ENCODE measurements at regions of chr1 and their contacts with region 1.

Region 1: GRCh38 chr1:246753670-246754535 is 29.7 kb downstream of the SCCPDH start:
- DNase-seq: no peak
- H3K4me3 ChIP-seq: no peak overlapping the region
- CTCF ChIP-seq: peak; percentile 80

Region 2: DNA sequence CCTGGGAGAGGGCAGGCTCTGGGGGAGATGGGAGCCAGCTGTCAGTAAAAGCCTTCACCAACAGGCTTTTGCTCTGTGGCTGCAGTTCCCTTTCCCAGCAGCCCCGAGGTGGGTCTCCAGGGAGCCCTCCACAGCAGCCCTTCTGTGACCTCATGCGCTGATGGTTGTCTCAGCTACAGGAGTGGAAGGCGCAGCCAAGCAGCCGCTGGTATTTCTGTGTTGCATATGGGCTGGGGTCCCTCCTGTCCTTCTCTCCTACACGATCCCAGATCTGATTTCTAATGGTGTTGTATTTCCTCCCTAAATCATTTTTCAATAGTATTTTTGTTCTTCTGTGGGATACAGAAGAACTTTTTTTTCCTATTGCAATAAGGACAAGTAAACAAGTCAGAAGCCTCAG is 72.0 kb before region 1 on chr1:
- CTCF ChIA-PET with region 1: interaction called, 20 read pairs
- POLR2A ChIA-PET with region 1: no interaction called
- DNase-seq: no peak
- H3K4me3 ChIP-seq: no peak overlapping the region
- CTCF ChIP-seq: no peak

Region 3: DNA sequence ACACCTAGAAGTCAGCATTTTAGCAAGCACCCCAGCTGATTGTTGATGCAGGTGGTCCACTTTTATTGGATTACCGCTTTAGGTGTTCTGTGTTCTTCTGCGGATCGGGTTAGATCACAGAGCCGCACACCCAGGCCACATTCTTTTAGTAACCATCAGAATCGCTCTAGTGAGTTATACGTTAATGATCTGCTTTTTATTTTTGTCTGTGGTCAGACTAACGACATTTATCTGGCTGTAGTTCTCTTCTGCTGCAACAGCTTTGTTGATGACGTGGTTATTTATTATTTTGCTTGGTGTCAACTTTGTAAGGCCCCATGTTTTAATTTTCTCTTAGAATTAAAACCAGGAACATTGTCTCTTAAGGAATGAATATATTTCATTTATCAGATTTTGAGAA is 11.5 kb before region 1 on chr1:
- CTCF ChIA-PET with region 1: interaction called, 36 read pairs
- POLR2A ChIA-PET with region 1: no interaction called
- DNase-seq: no peak
- H3K4me3 ChIP-seq: no peak overlapping the region
- CTCF ChIP-seq: no peak

Measured in AG04449 (cell line).